GM10248 (cell line): ENCODE measurements at regions of chr18 and their contacts with region 1.

Region 1: GRCh38 chr18:63844254-63844653 is 43.3 kb upstream of the SERPINB2 start:
- DNase-seq: no peak
- CTCF ChIP-seq: peak; percentile 27

Region 2: DNA sequence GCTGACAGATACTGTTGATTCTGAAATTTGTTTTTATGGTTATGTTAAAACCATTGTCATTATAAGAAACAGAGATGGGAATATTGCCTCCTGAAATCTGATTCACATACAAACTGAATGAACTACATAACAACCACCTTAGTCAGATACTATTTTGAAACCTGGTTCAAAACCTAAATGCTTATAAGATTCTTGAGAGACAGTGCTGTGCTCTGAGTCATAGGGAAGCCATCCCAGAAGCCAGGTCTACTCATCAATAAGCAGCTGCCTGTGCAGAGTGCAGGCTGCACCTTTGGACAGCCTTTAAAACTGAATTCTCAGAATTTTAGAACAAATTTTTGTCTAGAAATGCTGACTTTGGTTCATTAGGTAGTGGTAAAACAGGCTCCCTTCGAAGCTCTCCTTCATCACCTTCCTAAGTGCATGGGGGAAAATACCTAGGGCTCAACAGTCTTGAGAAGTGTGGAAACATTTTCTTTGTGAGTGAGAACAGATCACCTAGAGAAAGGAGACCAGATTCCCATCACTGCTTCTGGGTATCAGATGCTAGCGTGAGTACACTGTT is 69.0 kb before region 1 on chr18 and contains the start of gene SERPINB7:
- CTCF ChIA-PET with region 1: no interaction called
- POLR2A ChIA-PET with region 1: no interaction called
- DNase-seq: no peak
- CTCF ChIP-seq: no peak

Region 3: GRCh38 chr18:63817441-63818051 is 26.7 kb before region 1 on chr18:
- CTCF ChIA-PET with region 1: interaction called, 40 read pairs
- POLR2A ChIA-PET with region 1: no interaction called
- DNase-seq: no peak
- CTCF ChIP-seq: no peak

Region 4: GRCh38 chr18:63823518-63824219 is 20.6 kb before region 1 on chr18:
- CTCF ChIA-PET with region 1: interaction called, 49 read pairs
- POLR2A ChIA-PET with region 1: no interaction called
- DNase-seq: peak; percentile 14
- CTCF ChIP-seq: peak; percentile 25

Region 5: GRCh38 chr18:63831080-63831788 is 13.0 kb before region 1 on chr18:
- CTCF ChIA-PET with region 1: interaction called, 49 read pairs
- POLR2A ChIA-PET with region 1: no interaction called
- DNase-seq: peak; percentile 20
- CTCF ChIP-seq: no peak